CD4-positive, alpha-beta memory T cell (primary cell): ENCODE measurements at regions of chr19 and their contacts with region 1.

Region 1: GRCh38 chr19:13952154-13953035 is at the start of gene DCAF15:
- DNase-seq: peak; percentile 98 to 100 (median 99)
- H3K4me3 ChIP-seq: peak within 1 kb of the TSS; percentile 43 to 71
- H3K4me3 Mint-ChIP-seq: peak within 1 kb of the TSS; percentile 88 to 96 (median 92)
- H3K27ac ChIP-seq: peak within 1 kb of the TSS; percentile 80
- H3K27ac Mint-ChIP-seq: peak within 1 kb of the TSS; percentile 86 to 99 (median 96)
- H3K4me1 ChIP-seq: peaks cover 22% of the 10 kb centered on the region
- H3K4me1 Mint-ChIP-seq: peaks cover 12 to 28% (median 17%) of the 10 kb centered on the region in 4 donors
- H3K27me3 ChIP-seq: no peaks in the 10 kb centered on the region
- H3K27me3 Mint-ChIP-seq: no peaks in the 10 kb centered on the region
- total RNA-seq, gene DCAF15: 92.9 to 96.7 TPM

Region 2: GRCh38 chr19:13689085-13689484 is 263.3 kb before region 1 on chr19:
- CTCF ChIA-PET with region 1: no interaction called
- POLR2A ChIA-PET with region 1: no interaction called
- intact Hi-C with region 1: no loop called
- DNase-seq: peak in 2 of 5 donors; percentile 10 to 14
- H3K4me3 ChIP-seq: no peak overlapping the region
- H3K4me3 Mint-ChIP-seq: peak overlapping the region in 1 of 8 donors; percentile 40
- H3K27ac ChIP-seq: no peak overlapping the region
- H3K27ac Mint-ChIP-seq: no peak overlapping the region
- H3K4me1 ChIP-seq: no peaks in the 10 kb centered on the region
- H3K4me1 Mint-ChIP-seq: peaks cover 0 to 4% (median 1%) of the 10 kb centered on the region in 4 donors
- H3K27me3 ChIP-seq: no peaks in the 10 kb centered on the region
- H3K27me3 Mint-ChIP-seq: peaks cover 10 to 33% of the 10 kb centered on the region in 2 donors

Region 3: GRCh38 chr19:13905938-13906904 is 46.2 kb before region 1 on chr19 and contains the starts of genes BRME1 and CC2D1A:
- CTCF ChIA-PET with region 1: interaction called, 5 read pairs
- POLR2A ChIA-PET with region 1: interaction called, 8 read pairs
- intact Hi-C with region 1: loop called (anchors 5 kb)
- DNase-seq: peak; percentile 91 to 92 (median 92)
- H3K4me3 ChIP-seq: peak within 1 kb of the TSS; percentile 34 to 79
- H3K4me3 Mint-ChIP-seq: peak within 1 kb of the TSS; percentile 82 to 93 (median 88)
- H3K27ac ChIP-seq: peak within 1 kb of the TSS; percentile 77
- H3K27ac Mint-ChIP-seq: peak within 1 kb of the TSS; percentile 73 to 98 (median 94)
- H3K4me1 ChIP-seq: peaks cover 15% of the 10 kb centered on the region
- H3K4me1 Mint-ChIP-seq: peaks cover 10 to 21% (median 13%) of the 10 kb centered on the region in 4 donors
- H3K27me3 ChIP-seq: no peaks in the 10 kb centered on the region
- H3K27me3 Mint-ChIP-seq: no peaks in the 10 kb centered on the region
- total RNA-seq, gene BRME1: 3.1 to 3.8 TPM
- total RNA-seq, gene CC2D1A: 32.9 to 37.1 TPM

Region 4: DNA sequence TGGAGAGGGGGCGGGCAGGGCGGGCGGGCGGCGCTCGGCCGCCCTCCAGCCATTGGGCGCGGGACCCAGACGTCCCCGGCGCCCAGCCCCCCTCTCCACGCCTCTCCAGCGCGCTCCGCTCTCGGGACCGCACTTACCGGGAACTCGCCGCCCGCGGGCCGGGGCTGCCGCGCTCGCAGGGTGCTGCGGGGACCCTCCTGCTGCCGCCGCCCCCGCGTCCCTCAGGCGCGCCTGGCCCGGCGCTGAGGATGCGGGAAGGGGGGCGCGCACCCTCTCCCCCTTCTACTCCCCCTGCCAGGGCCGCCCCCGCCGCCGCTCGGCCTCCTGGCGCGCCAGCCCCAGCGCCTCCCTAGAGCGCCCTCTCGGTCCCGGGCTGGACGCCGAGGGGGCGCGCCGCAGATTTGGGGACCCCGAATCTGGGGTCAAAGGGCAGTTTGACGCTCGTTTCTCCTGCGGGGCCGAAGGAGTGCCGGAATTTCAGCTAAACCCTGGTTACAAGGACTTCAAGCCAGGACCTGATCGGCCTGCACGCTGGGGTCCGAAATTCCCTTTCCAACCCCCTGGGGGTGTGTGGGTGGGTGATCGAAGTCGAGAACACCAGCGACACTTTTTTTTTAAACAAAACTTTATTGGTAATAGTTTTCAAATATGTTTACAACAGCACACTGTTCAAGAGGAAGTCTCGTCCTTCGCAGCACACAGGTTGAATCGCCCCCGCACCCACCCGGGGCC is 138.9 kb after region 1 on chr19:
- CTCF ChIA-PET with region 1: no interaction called
- POLR2A ChIA-PET with region 1: no interaction called
- intact Hi-C with region 1: loop called (anchors 1 kb)
- DNase-seq: peak; percentile 79 to 84 (median 80)
- H3K4me3 ChIP-seq: peak overlapping the region; percentile 86 to 88
- H3K4me3 Mint-ChIP-seq: peak overlapping the region; percentile 99 to 100 (median 100)
- H3K27ac ChIP-seq: peak overlapping the region; percentile 72
- H3K27ac Mint-ChIP-seq: peak overlapping the region; percentile 95 to 100 (median 99)
- H3K4me1 ChIP-seq: peaks cover 14% of the 10 kb centered on the region
- H3K4me1 Mint-ChIP-seq: peaks cover 10 to 28% (median 21%) of the 10 kb centered on the region in 4 donors
- H3K27me3 ChIP-seq: no peaks in the 10 kb centered on the region
- H3K27me3 Mint-ChIP-seq: peaks cover 0 to 2% of the 10 kb centered on the region in 2 donors